ENCODE measurements at regions of chr5 and their contacts with region 1.

Region 1: GRCh38 chr5:112174959-112175594 is 244.0 kb downstream of the EPB41L4A start:
- DNase-seq: peak; percentile 81
- H3K4me3 ChIP-seq: peak overlapping the region; percentile 30
- H3K27ac ChIP-seq: no peak overlapping the region
- H3K4me1 ChIP-seq: peaks cover 9% of the 10 kb centered on the region
- CTCF ChIP-seq: peak; percentile 91

Region 2: DNA sequence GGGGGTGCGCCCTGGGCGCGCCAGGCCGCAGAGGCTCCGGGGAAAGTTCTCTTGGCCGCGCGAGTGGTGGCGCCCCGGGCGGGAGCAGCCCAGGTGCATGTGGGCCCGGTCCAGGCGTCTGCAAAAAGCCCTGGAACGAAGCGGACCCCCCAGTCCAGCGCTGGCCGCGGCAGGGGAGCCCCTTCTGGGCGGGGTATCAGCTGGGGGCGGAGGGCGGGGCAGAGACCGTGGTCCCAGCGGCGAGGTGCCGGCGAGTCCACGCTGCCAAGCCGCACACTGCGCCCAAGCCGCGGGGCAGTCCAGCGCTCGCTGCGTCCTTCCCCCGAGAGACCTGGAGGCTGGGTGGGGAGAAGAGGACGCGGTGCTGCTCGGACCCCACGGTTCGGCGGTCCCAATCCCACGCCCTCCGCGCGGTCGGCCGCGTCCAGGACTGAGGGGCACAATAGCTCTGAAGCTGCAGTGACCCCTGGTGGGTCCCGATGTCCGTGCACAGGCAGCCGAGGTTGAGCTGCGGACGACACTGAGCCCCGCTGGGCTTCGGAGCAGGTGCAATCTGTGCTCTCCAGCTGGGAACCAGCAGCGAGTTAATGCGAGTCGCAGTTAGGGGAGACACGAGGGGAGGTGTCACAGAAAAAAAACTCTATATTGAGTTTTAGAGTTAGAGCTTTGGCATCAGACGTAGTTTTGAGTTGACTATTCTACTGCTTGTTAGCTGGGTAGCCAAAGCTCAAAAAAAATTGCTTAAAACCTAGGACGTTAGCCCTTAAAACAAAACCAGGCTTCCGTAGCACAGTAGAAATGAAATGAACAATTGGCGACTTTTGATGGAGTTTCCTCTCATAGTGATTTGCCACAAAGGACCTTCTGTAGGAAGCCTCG is 245.1 kb after region 1 on chr5:
- CTCF ChIA-PET with region 1: no interaction called
- POLR2A ChIA-PET with region 1: interaction called, 4 read pairs
- intact Hi-C with region 1: loop called (anchors 1 kb)
- DNase-seq: peak; percentile 37
- H3K4me3 ChIP-seq: no peak overlapping the region
- H3K27ac ChIP-seq: no peak overlapping the region
- H3K4me1 ChIP-seq: peaks cover 5% of the 10 kb centered on the region
- CTCF ChIP-seq: peak; percentile 70

Region 3: DNA sequence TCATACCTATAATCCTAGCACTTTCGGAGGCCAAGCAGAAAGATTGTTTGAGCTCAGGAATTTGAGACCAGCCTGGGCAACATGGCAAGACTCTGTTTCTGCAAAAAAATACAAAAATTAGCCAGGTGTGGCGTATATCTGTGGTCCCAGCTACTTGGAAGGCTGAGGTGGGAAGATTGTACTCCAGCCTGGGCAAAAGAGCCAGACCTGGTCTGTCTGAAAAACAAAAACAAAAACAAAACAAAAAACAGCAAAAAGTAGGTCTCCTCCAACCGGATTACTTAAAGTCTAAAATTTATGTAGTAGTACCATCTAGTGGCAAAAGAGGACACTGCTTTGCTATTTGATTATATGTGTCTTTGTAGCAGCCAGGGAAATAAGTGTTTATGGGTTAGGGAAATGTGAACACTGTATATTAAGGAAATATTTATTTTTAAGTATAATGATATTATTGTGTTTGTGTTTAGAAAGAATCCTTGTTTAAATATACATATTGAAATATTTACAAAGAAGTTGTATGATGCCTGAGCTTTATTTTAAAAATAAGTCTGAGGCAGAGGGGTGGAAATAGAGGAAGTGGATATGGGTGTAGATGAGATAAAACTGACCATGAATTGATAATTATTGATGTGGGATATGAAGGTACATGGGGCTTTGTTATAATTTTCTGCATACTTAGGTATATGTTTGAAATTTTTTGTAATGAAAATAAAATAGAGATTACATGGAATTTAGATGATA is 582.6 kb after region 1 on chr5:
- CTCF ChIA-PET with region 1: no interaction called
- POLR2A ChIA-PET with region 1: no interaction called
- intact Hi-C with region 1: loop called (anchors 10 kb)
- DNase-seq: peak; percentile 74
- H3K4me3 ChIP-seq: no peak overlapping the region
- H3K27ac ChIP-seq: no peak overlapping the region
- H3K4me1 ChIP-seq: no peaks in the 10 kb centered on the region
- CTCF ChIP-seq: peak; percentile 94